ENCODE measurements at regions of chr1 and their contacts with region 1.

Region 1: DNA sequence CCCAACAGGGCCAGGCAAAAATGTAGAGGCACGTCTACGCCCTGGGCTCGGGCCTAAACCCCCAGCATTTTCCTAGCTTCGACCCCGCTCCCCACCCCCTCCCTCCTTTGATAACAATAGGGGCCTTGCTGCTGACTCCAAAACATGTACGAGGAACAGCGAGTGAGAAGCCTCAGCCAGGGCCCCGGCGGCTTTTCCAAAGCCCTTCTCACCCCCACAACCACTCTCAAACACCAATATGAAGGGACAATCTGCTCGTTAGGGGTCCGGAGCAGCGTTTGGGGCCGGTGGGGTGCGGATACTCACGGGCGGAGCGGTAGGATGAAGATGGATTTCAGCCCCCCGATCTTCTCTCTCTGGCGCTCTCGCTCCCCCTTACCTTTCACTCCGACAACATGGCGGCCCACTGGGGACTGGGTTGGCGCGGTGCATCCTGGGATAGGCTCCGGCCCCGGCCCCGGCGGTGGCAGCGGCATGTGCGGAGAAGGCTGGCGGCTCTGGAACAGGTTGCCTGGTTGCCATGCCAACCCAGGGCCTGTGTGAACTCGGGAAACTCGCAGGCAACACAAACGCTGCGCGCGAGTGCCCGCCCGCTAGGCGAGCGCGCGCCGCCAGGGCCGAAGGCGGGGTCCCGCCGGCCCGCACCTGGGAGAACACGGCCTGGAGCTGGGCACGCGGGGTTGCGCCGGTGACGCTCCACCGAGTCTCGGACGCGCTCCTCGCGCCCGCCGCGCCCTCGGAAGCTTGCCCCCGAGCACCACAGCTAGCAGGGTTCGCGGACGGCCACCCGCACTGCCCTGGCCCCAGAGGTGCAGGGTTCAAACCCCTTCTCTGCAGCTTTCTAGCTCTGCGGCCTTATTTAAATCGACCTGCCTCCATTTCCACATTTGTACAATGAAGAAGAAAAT is at the start of gene PUM1:
- DNase-seq: peak; percentile 99
- H3K4me3 ChIP-seq: peak within 1 kb of the TSS; percentile 62 to 75
- H3K27ac ChIP-seq: peak within 1 kb of the TSS; percentile 96 to 99
- H3K4me1 ChIP-seq: peaks cover 11% of the 10 kb centered on the region
- H3K27me3 ChIP-seq: no peaks in the 10 kb centered on the region
- CTCF ChIP-seq: peak in 3 of 4 experiments; percentile 31 to 65 (median 61)
- POLR2A ChIP-seq: peak; percentile 89
- total RNA-seq, gene PUM1: 80.3 to 120 TPM

Region 2: GRCh38 chr1:30790850-30791778 is 274.4 kb before region 1 on chr1:
- intact Hi-C with region 1: loop called (anchors 10 kb)
- DNase-seq: no peak
- H3K4me3 ChIP-seq: no peak overlapping the region
- H3K27ac ChIP-seq: peak overlapping the region in 1 of 2 donors; percentile 11
- H3K4me1 ChIP-seq: no peaks in the 10 kb centered on the region
- H3K27me3 ChIP-seq: no peaks in the 10 kb centered on the region
- CTCF ChIP-seq: no peak
- POLR2A ChIP-seq: no peak

Region 3: GRCh38 chr1:30929135-30929889 is 136.3 kb before region 1 on chr1:
- intact Hi-C with region 1: loop called (anchors 10 kb)
- DNase-seq: no peak
- H3K4me3 ChIP-seq: no peak overlapping the region
- H3K27ac ChIP-seq: peak overlapping the region; percentile 16 to 48
- H3K4me1 ChIP-seq: no peaks in the 10 kb centered on the region
- H3K27me3 ChIP-seq: no peaks in the 10 kb centered on the region
- CTCF ChIP-seq: peak; percentile 42 to 69 (median 58)
- POLR2A ChIP-seq: no peak

Region 4: GRCh38 chr1:30977105-30977504 is 88.5 kb before region 1 on chr1:
- intact Hi-C with region 1: loop called (anchors 5 kb)
- DNase-seq: no peak
- H3K4me3 ChIP-seq: no peak overlapping the region
- H3K27ac ChIP-seq: no peak overlapping the region
- H3K4me1 ChIP-seq: no peaks in the 10 kb centered on the region
- H3K27me3 ChIP-seq: no peaks in the 10 kb centered on the region
- CTCF ChIP-seq: no peak
- POLR2A ChIP-seq: no peak

Region 5: GRCh38 chr1:31155216-31155841 is 89.8 kb after region 1 on chr1:
- intact Hi-C with region 1: loop called (anchors 5 kb)
- DNase-seq: peak; percentile 43
- H3K4me3 ChIP-seq: peak overlapping the region; percentile 71 to 81
- H3K27ac ChIP-seq: peak overlapping the region; percentile 82 to 93
- H3K4me1 ChIP-seq: no peaks in the 10 kb centered on the region
- H3K27me3 ChIP-seq: no peaks in the 10 kb centered on the region
- CTCF ChIP-seq: peak in 3 of 4 experiments; percentile 27 to 51 (median 47)
- POLR2A ChIP-seq: peak; percentile 9